ENCODE measurements at regions of chr6 and their contacts with region 1.

Region 1: DNA sequence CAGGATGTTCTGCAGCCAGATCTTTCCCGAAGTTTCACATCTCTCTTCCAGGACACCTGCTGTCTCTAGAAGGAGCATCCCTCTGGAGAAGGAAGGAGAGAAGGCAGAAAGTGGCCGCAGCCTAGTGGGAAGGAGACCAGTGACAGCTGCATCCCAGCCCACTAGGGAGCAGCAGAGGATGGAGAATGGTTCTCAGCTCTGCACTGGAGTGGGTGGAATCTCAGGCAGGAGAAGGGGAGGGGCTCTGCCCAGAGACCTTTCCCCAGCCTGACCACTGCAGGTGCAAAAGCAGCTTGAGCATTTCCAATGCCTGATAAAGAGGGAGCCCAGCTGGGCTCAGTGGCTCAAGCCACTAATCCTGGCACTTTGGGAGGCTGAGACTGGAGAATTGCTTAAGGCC is 32.3 kb downstream of the NCR2 start:
- DNase-seq: peak; percentile 87
- H3K4me3 ChIP-seq: no peak overlapping the region
- H3K4me3 Mint-ChIP-seq: no peak overlapping the region
- H3K27ac Mint-ChIP-seq: no peak overlapping the region
- H3K4me1 ChIP-seq: peaks cover 9% of the 10 kb centered on the region; the same call in 1 of the 2 replicates
- H3K4me1 Mint-ChIP-seq: peaks cover 13% of the 10 kb centered on the region
- H3K27me3 ChIP-seq: no peaks in the 10 kb centered on the region
- H3K27me3 Mint-ChIP-seq: peaks cover 6% of the 10 kb centered on the region
- CTCF ChIP-seq: peak; percentile 90 to 94

Region 2: DNA sequence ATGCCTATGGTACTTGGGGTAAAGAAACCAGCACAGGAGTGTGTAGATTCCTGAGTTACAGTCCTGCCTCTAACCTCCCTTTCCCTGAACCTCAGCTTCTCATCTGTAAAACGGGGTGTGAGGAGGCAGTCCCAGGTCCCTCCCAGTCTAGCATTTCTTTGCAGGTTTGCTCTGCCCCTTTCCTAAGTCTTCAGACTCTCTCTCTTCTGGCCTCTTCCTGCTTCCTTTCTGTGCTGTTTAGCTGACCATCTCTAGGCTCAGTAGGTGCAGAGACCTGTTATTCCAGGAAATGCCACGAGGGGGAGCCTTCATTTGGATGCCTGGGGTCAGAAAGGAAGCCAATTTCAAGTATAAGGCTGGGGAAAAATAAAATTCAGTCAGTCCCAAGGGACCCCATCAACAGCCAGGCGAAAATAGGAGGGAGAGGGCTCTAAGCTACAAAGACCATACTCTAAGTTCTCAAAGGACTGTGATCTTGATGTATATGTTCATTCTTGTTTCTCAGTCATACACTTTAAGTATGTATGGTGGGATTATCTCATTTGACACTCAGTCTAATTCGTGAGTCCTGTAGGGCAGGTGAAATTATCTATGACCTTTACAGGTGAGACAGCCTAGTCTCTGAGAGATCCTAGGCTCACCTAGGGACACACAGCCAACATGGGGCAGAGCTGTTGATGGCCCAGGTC is 56.8 kb after region 1 on chr6:
- CTCF ChIA-PET with region 1: interaction called, 3 read pairs
- POLR2A ChIA-PET with region 1: no interaction called
- intact Hi-C with region 1: loop called (anchors 1 kb)
- DNase-seq: peak; percentile 79 to 88
- H3K4me3 ChIP-seq: no peak overlapping the region
- H3K4me3 Mint-ChIP-seq: no peak overlapping the region
- H3K27ac Mint-ChIP-seq: no peak overlapping the region
- H3K4me1 ChIP-seq: peaks cover 31% of the 10 kb centered on the region
- H3K4me1 Mint-ChIP-seq: no peaks in the 10 kb centered on the region
- H3K27me3 ChIP-seq: no peaks in the 10 kb centered on the region
- H3K27me3 Mint-ChIP-seq: no peaks in the 10 kb centered on the region
- CTCF ChIP-seq: peak; percentile 79 to 82

Region 3: GRCh38 chr6:41455818-41456217 is 88.1 kb after region 1 on chr6:
- CTCF ChIA-PET with region 1: interaction called, 9 read pairs
- POLR2A ChIA-PET with region 1: no interaction called
- intact Hi-C with region 1: loop called (anchors 1 kb)
- DNase-seq: peak; percentile 40 to 68
- H3K4me3 ChIP-seq: no peak overlapping the region
- H3K4me3 Mint-ChIP-seq: peak overlapping the region; percentile 52
- H3K27ac Mint-ChIP-seq: peak overlapping the region; percentile 96
- H3K4me1 ChIP-seq: peaks cover 60% of the 10 kb centered on the region
- H3K4me1 Mint-ChIP-seq: peaks cover 37% of the 10 kb centered on the region
- H3K27me3 ChIP-seq: no peaks in the 10 kb centered on the region
- H3K27me3 Mint-ChIP-seq: no peaks in the 10 kb centered on the region
- CTCF ChIP-seq: no peak

Region 4: DNA sequence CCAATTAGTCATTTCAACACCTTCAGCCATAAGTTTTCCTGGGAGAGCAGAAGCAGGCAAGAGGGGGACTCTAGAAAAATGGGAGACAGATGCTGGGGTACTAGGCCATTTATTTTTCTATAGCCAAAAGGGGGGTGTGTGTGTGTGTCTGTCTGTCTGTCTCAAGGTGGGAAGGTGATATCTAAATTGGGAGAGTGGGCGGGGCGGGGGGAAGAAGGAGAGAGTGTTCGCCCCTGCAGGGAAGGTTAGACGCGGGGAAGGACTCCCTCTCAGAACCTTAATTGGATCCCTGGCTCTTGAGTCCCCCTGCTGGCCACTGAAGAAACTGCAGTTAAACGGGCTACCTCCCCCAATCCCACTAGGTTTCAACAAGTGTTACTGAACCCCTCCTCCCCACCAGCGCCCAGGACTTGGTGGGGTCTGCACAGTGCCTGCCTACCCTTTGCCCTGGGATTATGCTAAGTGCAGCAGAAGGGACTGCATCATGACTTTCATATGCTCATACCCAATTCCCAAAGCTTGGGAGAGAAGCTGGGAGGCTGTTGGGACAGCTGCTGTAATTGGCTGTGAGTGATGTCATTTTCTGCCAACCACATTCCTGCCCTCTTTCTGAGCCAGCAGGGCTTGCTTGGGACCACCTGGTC is 224.3 kb after region 1 on chr6:
- CTCF ChIA-PET with region 1: interaction called, 4 read pairs
- POLR2A ChIA-PET with region 1: no interaction called
- intact Hi-C with region 1: loop called (anchors 2 kb)
- DNase-seq: peak; percentile 70 to 84
- H3K4me3 ChIP-seq: no peak overlapping the region
- H3K4me3 Mint-ChIP-seq: no peak overlapping the region
- H3K27ac Mint-ChIP-seq: peak overlapping the region; percentile 71
- H3K4me1 ChIP-seq: no peaks in the 10 kb centered on the region
- H3K4me1 Mint-ChIP-seq: peaks cover 24% of the 10 kb centered on the region
- H3K27me3 ChIP-seq: no peaks in the 10 kb centered on the region
- H3K27me3 Mint-ChIP-seq: no peaks in the 10 kb centered on the region
- CTCF ChIP-seq: peak; percentile 88 to 94

Region 5: GRCh38 chr6:41602864-41603608 is 235.3 kb after region 1 on chr6:
- CTCF ChIA-PET with region 1: interaction called, 32 read pairs
- POLR2A ChIA-PET with region 1: no interaction called
- intact Hi-C with region 1: loop called (anchors 1 kb)
- DNase-seq: peak; percentile 87 to 88
- H3K4me3 ChIP-seq: no peak overlapping the region
- H3K4me3 Mint-ChIP-seq: peak overlapping the region; percentile 69
- H3K27ac Mint-ChIP-seq: peak overlapping the region; percentile 73
- H3K4me1 ChIP-seq: no peaks in the 10 kb centered on the region
- H3K4me1 Mint-ChIP-seq: peaks cover 19% of the 10 kb centered on the region
- H3K27me3 ChIP-seq: no peaks in the 10 kb centered on the region
- H3K27me3 Mint-ChIP-seq: no peaks in the 10 kb centered on the region
- CTCF ChIP-seq: peak; percentile 80 to 93

Region 6: DNA sequence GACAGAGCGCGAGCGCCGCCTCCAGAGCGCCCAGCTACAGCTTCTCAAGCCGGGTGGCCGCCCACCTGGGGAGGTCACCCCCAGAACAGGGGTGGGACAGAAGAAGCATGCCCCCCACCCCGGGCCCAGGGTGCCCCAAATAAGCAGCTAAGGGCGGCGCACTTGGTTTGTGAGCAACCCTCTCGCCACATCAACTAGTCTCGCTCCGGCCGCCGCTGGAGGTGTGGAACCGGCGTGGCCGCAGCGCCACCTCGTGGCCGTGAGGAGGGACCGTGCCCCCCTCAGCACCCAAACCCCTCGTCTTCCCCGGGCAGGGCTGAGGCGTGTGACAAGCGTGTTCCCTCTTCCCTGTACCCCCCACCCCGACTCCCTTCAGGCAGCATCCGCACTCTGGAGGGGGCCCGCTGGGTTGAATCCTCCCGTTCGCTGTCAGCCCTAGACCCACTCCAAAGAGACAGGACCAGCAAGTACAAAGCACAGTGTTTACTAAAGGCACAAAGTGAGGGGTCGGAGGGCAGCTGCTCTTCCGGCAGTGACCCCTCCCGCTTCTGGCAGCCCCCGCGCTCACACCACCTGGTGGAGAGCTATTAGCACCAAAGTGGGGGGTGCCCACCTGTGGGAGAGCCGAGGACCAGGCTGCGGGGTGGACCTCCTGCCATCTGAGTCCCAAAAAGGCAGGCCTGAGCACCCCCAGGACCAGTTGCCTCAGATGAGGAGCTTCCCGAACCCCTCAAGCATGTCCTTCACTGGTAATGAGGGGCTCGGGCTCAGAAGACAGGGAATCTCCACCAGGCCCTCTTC is 316.0 kb after region 1 on chr6:
- CTCF ChIA-PET with region 1: interaction called, 20 read pairs
- POLR2A ChIA-PET with region 1: no interaction called
- intact Hi-C with region 1: loop called (anchors 1 kb)
- DNase-seq: peak; percentile 65 to 83
- H3K4me3 ChIP-seq: no peak overlapping the region
- H3K4me3 Mint-ChIP-seq: peak overlapping the region; percentile 45
- H3K27ac Mint-ChIP-seq: no peak overlapping the region
- H3K4me1 ChIP-seq: peaks cover 7% of the 10 kb centered on the region; the same call in 1 of the 2 replicates
- H3K4me1 Mint-ChIP-seq: no peaks in the 10 kb centered on the region
- H3K27me3 ChIP-seq: no peaks in the 10 kb centered on the region
- H3K27me3 Mint-ChIP-seq: no peaks in the 10 kb centered on the region
- CTCF ChIP-seq: peak; percentile 85 to 89

Region 7: DNA sequence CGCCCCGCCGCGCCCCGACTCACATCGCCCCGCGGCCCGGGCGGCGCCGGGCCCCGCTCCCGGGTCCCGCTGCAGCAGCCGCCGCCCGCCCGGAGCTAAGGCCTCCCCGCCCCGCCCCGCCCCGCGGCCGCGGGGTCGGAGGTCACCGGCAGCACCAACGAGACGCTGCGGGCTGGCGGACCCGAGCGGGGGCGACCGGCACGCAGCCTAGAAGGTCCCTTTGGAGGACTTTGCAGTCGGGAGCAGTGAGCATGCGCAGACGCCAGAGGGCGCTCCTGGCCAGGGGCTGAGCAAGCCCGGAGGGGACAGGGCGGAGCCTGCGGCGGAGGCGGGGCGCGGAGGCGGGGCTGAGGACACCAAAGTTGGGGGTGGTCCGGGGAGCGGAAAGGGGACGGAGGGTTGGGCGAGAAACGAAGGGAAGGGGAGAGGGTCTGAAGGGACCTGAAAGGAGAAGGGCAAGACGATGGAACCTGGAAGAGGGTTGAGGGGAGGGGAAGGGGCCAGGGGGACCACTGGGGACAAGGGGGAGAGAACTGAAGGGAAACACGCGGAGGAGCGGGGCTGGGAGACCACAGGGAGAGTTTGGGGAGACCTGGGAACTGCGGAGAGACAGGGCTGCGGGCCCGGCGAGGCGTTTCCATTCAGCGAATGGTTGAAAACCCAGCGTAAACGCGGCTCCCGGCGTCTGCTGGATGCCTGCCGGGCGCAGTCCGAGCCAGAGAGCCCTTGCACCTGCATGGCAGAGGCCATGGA is 412.3 kb after region 1 on chr6 and contains the start of gene FRS3:
- CTCF ChIA-PET with region 1: interaction called, 3 read pairs
- POLR2A ChIA-PET with region 1: no interaction called
- intact Hi-C with region 1: loop called (anchors 1 kb)
- DNase-seq: peak; percentile 96 to 99
- H3K4me3 ChIP-seq: peak within 1 kb of the TSS; percentile 82
- H3K4me3 Mint-ChIP-seq: peak within 1 kb of the TSS; percentile 88
- H3K27ac Mint-ChIP-seq: peak within 1 kb of the TSS; percentile 74
- H3K4me1 ChIP-seq: 0 out of 2 replicates have a peak, but pooled peaks cover 3% of the 10 kb centered on the region
- H3K4me1 Mint-ChIP-seq: peaks cover 18% of the 10 kb centered on the region
- H3K27me3 ChIP-seq: no peaks in the 10 kb centered on the region
- H3K27me3 Mint-ChIP-seq: no peaks in the 10 kb centered on the region
- CTCF ChIP-seq: peak; percentile 85 to 96
- total RNA-seq, gene FRS3: 4.1 and 4.3 TPM in 2 replicates

Region 8: DNA sequence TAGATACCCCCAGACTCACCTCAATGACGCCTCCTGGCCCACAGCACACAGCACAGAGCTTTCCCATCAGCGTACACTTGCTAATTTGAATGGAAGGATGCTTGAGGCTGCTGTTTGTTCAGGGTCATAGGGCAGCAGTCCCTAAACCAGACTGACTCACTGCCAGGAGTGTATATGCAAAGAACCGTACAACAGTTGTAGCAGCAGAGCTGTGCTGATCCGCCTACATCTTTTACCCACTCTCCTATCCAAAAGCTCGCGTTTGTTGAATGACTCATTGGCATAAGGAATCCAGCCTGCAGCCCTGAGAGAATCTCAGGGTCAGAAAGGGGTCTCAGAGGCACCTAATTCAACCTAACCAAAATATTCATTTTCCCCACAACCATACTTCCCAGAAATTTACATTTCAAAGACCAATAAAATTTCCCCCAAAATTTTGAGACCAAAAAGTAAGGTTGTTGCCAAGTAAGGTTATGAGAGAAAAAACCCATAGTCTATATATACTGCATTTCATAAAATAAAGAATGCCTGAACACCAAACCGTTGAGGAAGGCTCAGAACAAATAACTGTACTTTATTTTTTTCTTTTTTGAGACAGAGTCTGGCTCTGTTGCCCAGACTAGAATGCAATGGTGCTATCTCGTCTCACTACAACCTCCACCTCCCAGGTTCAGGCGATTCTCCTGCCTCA is 609.2 kb after region 1 on chr6:
- CTCF ChIA-PET with region 1: no interaction called
- POLR2A ChIA-PET with region 1: no interaction called
- intact Hi-C with region 1: no loop called
- DNase-seq: no peak
- H3K4me3 ChIP-seq: no peak overlapping the region
- H3K4me3 Mint-ChIP-seq: no peak overlapping the region
- H3K27ac Mint-ChIP-seq: no peak overlapping the region
- H3K4me1 ChIP-seq: no peaks in the 10 kb centered on the region
- H3K4me1 Mint-ChIP-seq: no peaks in the 10 kb centered on the region
- H3K27me3 ChIP-seq: no peaks in the 10 kb centered on the region
- H3K27me3 Mint-ChIP-seq: no peaks in the 10 kb centered on the region
- CTCF ChIP-seq: no peak

Measured in Caco-2 (cell line).